SK-N-SH (cell line): ENCODE measurements at regions of chr14 and their contacts with region 1.

Region 1: DNA sequence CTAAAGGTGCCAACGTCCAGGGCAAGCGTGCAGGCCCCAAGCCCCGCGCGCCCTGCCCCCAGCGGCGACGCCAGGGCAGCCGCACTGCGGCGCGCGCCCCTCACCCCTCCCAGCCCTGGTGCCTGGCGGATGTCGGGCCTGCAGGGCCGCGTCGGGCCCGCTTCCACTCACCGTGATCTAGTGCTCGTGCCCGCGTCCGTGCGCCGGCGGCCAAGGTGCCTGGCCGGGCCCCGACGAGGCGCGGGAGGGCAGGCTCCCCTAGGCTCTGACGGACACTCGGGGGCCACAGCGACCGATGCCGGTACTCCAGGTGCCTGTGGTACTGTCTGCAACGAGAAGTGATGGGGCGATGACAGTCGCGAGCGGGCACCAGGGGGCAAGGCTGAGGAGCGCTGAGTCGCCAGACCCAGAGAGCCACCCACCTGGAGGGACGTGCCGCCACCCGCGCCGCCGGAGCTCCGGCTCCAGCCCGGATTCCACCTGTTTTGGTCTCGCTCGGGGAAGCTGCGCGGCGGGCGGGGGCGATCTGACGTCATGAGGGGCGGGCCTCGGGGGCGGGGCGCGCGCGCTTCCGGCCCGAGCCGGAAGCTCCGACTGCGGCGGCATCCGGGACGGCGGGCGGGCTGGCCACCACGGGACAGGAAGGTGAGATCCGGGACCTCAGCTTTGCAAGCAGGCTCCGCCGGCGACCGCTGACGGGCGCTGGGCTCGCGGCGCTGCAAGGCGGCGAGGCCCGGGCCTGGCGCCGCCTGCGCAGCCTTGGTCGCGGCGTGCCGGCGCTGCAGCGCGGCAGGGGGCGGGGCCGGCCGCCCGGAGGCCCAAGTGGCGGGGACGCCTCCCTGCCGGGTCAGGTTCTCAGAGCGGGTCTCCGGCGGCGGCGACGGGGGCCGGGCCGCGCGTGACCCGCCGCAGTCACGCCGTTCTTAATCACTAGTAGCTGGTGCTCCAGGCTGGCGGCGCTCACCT is at the starts of genes LYSET and MOAP1:
- DNase-seq: peak; percentile 98
- H3K4me3 ChIP-seq: peak within 1 kb of the TSS; percentile 94 to 99
- H3K27ac ChIP-seq: peak within 1 kb of the TSS; percentile 92 to 94
- H3K4me1 ChIP-seq: peaks cover 2 to 17% of the 10 kb centered on the region in 2 experiments; a peak in 2 of 4 replicates
- H3K27me3 ChIP-seq: no peaks in the 10 kb centered on the region
- CTCF ChIP-seq: peak; percentile 31
- EP300 ChIP-seq: no peak
- RAD21 ChIP-seq: no peak
- polyA plus RNA-seq, gene LYSET: 17.7 and 18.5 TPM in 2 replicates
- polyA plus RNA-seq, gene MOAP1: 25.0 and 42.0 TPM in 2 replicates

Region 2: DNA sequence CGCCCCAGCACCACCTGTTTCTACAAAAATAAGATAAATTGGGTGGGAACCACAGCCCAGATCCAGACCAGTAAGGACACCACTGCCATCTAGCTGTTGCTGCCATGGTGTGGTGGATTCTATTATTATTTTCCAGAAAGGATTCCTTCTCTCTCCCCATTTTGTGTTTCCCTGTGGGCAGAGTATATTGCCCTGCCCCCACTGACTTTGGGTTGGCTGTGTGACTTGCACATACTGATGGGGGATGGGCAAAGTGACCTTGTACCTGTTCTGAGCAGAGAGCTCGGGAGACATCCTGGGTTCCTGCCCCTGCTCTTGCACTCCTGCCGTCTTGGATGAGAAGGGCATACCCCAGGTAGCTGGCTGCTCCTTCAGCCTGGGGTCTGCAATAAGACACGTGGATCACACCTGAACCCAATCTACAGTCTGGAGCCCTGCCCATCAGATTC is 24.3 kb before region 1 on chr14:
- CTCF ChIA-PET with region 1: interaction called, 14 read pairs
- POLR2A ChIA-PET with region 1: no interaction called
- DNase-seq: peak; percentile 56
- H3K4me3 ChIP-seq: no peak overlapping the region
- H3K27ac ChIP-seq: no peak overlapping the region
- H3K4me1 ChIP-seq: peaks cover 0 to 10% of the 10 kb centered on the region in 2 experiments; a peak in 1 of 4 replicates
- H3K27me3 ChIP-seq: no peaks in the 10 kb centered on the region
- CTCF ChIP-seq: peak; percentile 37
- EP300 ChIP-seq: no peak
- RAD21 ChIP-seq: peak; percentile 57